T-cell (primary cell): ENCODE measurements at regions of chr9 and their contacts with region 1.

Region 1: DNA sequence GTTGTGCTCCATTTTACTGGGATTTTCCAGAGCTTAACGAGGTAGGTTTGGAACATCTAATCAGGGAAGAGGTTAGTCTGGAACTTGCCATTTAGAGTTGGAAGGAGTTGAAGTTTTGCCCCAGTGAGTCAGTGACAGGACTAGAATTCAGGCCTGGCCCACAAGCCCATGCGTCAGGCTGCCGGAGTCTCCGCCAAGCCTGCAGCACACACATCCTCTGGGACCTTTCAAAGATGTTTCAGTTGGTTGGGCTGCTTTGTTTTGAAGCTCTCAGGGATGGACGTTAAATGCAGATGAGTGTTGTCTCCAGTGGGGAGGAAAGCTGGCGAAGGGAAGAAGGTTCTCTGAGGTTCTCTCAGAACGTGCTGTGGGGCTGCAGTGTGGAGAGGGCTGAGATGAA is 147.0 kb downstream of the PSAT1 start:
- DNase-seq: no peak
- ATAC-seq: no peak
- H3K4me3 ChIP-seq: no peak overlapping the region
- H3K4me3 Mint-ChIP-seq: no peak overlapping the region
- H3K27ac ChIP-seq: no peak overlapping the region
- H3K27ac Mint-ChIP-seq: no peak overlapping the region
- H3K4me1 ChIP-seq: peaks cover 0 to 5% of the 10 kb centered on the region in 2 experiments
- H3K4me1 Mint-ChIP-seq: peaks cover 5 to 7% (median 6%) of the 10 kb centered on the region in 3 donors
- H3K27me3 ChIP-seq: peaks cover 0 to 16% of the 10 kb centered on the region in 2 experiments
- H3K27me3 Mint-ChIP-seq: peaks cover 9 to 11% of the 10 kb centered on the region in 2 donors

Region 2: DNA sequence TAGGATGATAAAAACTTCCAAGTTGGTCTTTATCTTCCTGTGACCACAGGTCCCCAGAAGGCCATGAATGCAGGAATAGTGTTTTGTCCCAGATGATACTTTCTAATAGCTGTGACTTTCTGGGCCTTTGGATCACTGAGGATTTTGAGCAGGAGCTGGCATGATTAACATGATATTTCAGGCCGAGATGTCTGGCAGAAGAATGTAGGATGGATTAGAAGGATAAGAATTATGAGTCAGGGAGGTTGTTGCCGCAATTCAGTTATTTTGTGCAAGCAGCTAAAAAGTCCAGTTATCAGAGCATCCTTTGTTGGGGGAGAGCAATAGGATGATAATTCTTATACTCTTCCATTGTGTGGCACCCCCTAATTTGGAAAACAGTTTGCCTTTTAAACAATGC is 42.7 kb after region 1 on chr9:
- CTCF ChIA-PET with region 1: interaction called, 4 to 10 read pairs
- POLR2A ChIA-PET with region 1: no interaction called
- DNase-seq: no peak
- ATAC-seq: no peak
- H3K4me3 ChIP-seq: no peak overlapping the region
- H3K4me3 Mint-ChIP-seq: no peak overlapping the region
- H3K27ac ChIP-seq: no peak overlapping the region
- H3K27ac Mint-ChIP-seq: no peak overlapping the region
- H3K4me1 ChIP-seq: no peaks in the 10 kb centered on the region
- H3K4me1 Mint-ChIP-seq: no peaks in the 10 kb centered on the region
- H3K27me3 ChIP-seq: no peaks in the 10 kb centered on the region
- H3K27me3 Mint-ChIP-seq: peaks cover 2 to 6% of the 10 kb centered on the region in 2 donors